ENCODE measurements at regions of chr3 and their contacts with region 1.

Region 1: GRCh38 chr3:43024181-43024885 is 45.2 kb downstream of the GASK1A start:
- DNase-seq: peak in 9 of 10 donors; percentile 44 to 84 (median 70)
- ATAC-seq: peak; percentile 94 to 97
- H3K4me3 Mint-ChIP-seq: peak overlapping the region; percentile 67 to 84 (median 82)
- H3K27ac Mint-ChIP-seq: peak overlapping the region; percentile 93 to 97 (median 95)
- H3K4me1 Mint-ChIP-seq: peaks cover 43 to 91% (median 80%) of the 10 kb centered on the region in 4 donors
- H3K27me3 Mint-ChIP-seq: no peaks in the 10 kb centered on the region

Region 2: GRCh38 chr3:43061101-43061895 is 37.0 kb after region 1 on chr3:
- POLR2A ChIA-PET with region 1: interaction called, 10 read pairs
- DNase-seq: no peak
- ATAC-seq: no peak
- H3K4me3 Mint-ChIP-seq: peak overlapping the region in 8 of 10 donors; percentile 48 to 84 (median 69)
- H3K27ac Mint-ChIP-seq: peak overlapping the region; percentile 15 to 95 (median 76)
- H3K4me1 Mint-ChIP-seq: peaks cover 9 to 39% (median 26%) of the 10 kb centered on the region in 4 donors
- H3K27me3 Mint-ChIP-seq: no peaks in the 10 kb centered on the region

Measured in naive thymus-derived CD8-positive, alpha-beta T cell (primary cell).